PC-9 (cell line): ENCODE measurements at regions of chr16 and their contacts with region 1.

Region 1: GRCh38 chr16:31202414-31203375 is at the start of gene PYCARD:
- DNase-seq: peak in 1 of 2 experiments; percentile 65
- H3K4me3 ChIP-seq: peak within 1 kb of the TSS; percentile 47
- H3K27ac ChIP-seq: no peak within 1 kb of the TSS
- H3K4me1 ChIP-seq: peaks cover 19% of the 10 kb centered on the region
- H3K27me3 ChIP-seq: no peaks in the 10 kb centered on the region
- CTCF ChIP-seq: no peak
- total RNA-seq, gene PYCARD: 72.9 and 107 TPM in 2 replicates

Region 2: GRCh38 chr16:31333686-31334649 is 131.3 kb after region 1 on chr16:
- CTCF ChIA-PET with region 1: no interaction called
- POLR2A ChIA-PET with region 1: no interaction called
- intact Hi-C with region 1: loop called (anchors 2 kb)
- DNase-seq: peak; percentile 57 to 60
- H3K4me3 ChIP-seq: no peak overlapping the region
- H3K27ac ChIP-seq: no peak overlapping the region
- H3K4me1 ChIP-seq: no peaks in the 10 kb centered on the region
- H3K27me3 ChIP-seq: peaks cover 47% of the 10 kb centered on the region
- CTCF ChIP-seq: peak; percentile 70

Region 3: GRCh38 chr16:31367853-31368252 is 165.2 kb after region 1 on chr16:
- CTCF ChIA-PET with region 1: no interaction called
- POLR2A ChIA-PET with region 1: no interaction called
- intact Hi-C with region 1: no loop called
- DNase-seq: no peak
- H3K4me3 ChIP-seq: no peak overlapping the region
- H3K27ac ChIP-seq: no peak overlapping the region
- H3K4me1 ChIP-seq: no peaks in the 10 kb centered on the region
- H3K27me3 ChIP-seq: peaks cover 26% of the 10 kb centered on the region
- CTCF ChIP-seq: no peak